Endothelial cell of umbilical vein (primary cell): ENCODE measurements at regions of chr17 and their contacts with region 1.

Region 1: GRCh38 chr17:28726226-28727130 is at the start of gene TLCD1:
- DNase-seq: peak; percentile 95
- H3K4me3 ChIP-seq: peak within 1 kb of the TSS; percentile 29 to 57 (median 41)
- H3K27ac ChIP-seq: peak within 1 kb of the TSS; percentile 10
- H3K4me1 ChIP-seq: peaks cover 38% of the 10 kb centered on the region
- H3K27me3 ChIP-seq: no peaks in the 10 kb centered on the region
- CTCF ChIP-seq: peak; percentile 98 to 99
- POLR2A ChIP-seq: no peak
- total RNA-seq, gene TLCD1: 1.8 and 2.6 TPM in 2 replicates

Region 2: GRCh38 chr17:28644985-28645939 is 81.2 kb before region 1 on chr17 and contains the start of gene BLTP2:
- CTCF ChIA-PET with region 1: interaction called, 12 read pairs
- POLR2A ChIA-PET with region 1: no interaction called
- dilution Hi-C with region 1: no loop called
- intact Hi-C with region 1: no loop called
- DNase-seq: peak; percentile 95
- H3K4me3 ChIP-seq: peak within 1 kb of the TSS; percentile 54 to 77 (median 71)
- H3K27ac ChIP-seq: peak within 1 kb of the TSS; percentile 36
- H3K4me1 ChIP-seq: peaks cover 23% of the 10 kb centered on the region
- H3K27me3 ChIP-seq: no peaks in the 10 kb centered on the region
- CTCF ChIP-seq: no peak
- POLR2A ChIP-seq: peak; percentile 93
- total RNA-seq, gene BLTP2: 164 and 165 TPM in 2 replicates

Region 3: DNA sequence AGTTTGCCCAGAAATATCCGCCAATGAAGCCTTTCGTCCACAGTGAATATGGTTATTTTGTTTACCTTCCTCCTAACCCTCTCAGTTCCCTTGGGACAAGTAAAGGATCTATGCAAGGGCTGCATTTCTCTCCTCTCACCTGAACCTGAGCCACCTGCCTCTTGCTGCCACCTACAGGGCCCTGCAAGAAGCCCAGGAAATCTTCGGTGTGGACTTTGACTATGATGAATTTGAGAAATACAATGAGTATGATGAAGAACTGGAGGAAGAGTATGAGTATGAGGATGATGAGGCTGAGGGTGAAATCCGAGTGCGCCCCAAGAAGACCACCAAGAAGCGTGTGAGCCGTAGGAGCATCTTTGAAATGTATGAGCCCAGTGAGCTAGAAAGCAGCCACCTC is 50.5 kb before region 1 on chr17:
- CTCF ChIA-PET with region 1: no interaction called
- POLR2A ChIA-PET with region 1: no interaction called
- dilution Hi-C with region 1: no loop called
- intact Hi-C with region 1: no loop called
- DNase-seq: no peak
- H3K4me3 ChIP-seq: no peak overlapping the region
- H3K27ac ChIP-seq: no peak overlapping the region
- H3K4me1 ChIP-seq: no peaks in the 10 kb centered on the region
- H3K27me3 ChIP-seq: no peaks in the 10 kb centered on the region
- CTCF ChIP-seq: no peak
- POLR2A ChIP-seq: no peak

Region 4: DNA sequence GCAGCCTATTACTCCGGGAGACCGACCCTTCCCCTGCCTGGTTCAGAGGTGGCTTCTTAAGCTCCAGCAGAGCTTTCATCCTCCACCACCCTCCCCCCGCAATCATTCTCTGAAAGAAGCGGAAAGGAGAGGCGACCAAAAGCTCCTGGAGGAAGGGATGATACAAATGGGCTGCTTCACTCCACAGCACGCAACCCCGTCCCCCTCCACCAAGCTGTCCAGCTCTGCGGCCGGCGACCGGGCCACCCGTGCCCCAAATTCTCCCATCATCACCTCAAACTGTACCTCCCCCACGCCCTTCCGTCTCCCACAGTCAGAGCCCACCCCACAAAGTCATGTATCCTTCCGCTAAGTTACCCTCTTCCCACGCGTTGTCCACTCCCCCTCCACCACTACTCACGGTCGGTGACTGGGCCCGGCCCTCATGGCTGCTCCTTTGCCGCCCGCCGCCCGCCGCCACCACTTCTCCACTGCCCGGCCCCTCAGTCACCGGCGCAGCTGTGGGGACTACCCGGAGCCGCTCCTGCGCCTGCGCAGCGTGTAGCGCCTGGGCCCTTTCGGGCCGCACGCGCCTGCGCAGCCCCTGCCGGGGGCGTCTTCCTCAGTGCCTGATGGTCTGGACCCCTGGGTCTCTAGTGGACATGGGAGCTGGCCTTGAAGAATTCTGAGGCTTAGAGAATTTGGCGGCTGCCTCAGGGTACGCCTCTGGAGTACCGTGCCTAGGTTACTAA is 116.0 kb after region 1 on chr17 and contains the start of gene FAM222B:
- CTCF ChIA-PET with region 1: interaction called, 11 read pairs
- POLR2A ChIA-PET with region 1: no interaction called
- dilution Hi-C with region 1: no loop called
- intact Hi-C with region 1: no loop called
- DNase-seq: peak; percentile 87
- H3K4me3 ChIP-seq: peak within 1 kb of the TSS; percentile 38 to 70 (median 65)
- H3K27ac ChIP-seq: peak within 1 kb of the TSS; percentile 54
- H3K4me1 ChIP-seq: peaks cover 19% of the 10 kb centered on the region
- H3K27me3 ChIP-seq: no peaks in the 10 kb centered on the region
- CTCF ChIP-seq: no peak
- POLR2A ChIP-seq: peak; percentile 72
- total RNA-seq, gene FAM222B: 30.6 and 33.7 TPM in 2 replicates

Region 5: DNA sequence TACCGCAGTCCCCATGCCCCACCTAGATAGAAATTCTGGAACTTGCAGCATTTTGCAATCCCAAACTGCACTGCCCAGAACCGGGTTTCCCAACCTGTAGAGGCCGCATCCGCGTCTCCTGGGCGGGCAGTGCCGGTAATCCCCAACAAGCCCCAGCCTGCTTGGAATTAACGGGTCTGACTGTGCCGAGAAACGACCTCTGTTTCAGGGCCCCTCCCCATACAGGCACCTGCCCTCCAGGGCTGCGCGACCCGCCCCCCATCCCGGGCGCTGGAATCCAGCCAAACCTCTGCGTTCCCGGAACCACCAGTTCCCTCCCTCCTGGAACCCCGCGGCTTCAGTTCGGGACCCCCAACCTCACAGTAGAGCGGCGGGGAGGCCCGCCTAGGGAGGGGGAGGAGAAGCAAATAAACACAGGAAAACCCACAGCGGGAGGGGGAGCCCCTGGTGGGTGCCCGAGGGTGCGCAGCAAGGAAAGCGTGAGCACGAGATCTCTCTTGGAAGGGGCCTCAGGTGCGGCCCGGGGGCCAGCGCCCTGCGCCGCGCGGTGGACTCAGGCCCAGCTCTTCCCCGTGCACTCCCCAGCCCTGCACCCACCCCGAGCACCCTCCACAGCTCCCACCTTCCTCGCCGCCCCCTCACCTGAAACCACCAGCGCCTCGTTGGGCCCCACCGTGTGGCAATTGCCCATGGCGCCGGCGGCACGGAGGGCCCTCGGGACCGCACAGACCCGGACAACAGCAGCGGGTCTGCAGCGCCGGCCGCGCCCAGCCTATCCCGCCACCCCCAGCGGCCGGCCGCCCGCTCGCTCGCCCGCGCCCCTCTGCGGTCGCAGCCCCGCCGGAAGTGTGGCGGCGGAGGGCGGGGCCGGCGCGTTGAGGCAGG is 170.6 kb after region 1 on chr17 and contains the start of gene FLOT2:
- CTCF ChIA-PET with region 1: interaction called, 19 read pairs
- POLR2A ChIA-PET with region 1: interaction called, 3 read pairs
- dilution Hi-C with region 1: no loop called
- intact Hi-C with region 1: loop called (anchors 2 kb)
- DNase-seq: peak; percentile 22
- H3K4me3 ChIP-seq: peak within 1 kb of the TSS; percentile 63 to 85 (median 66)
- H3K27ac ChIP-seq: peak within 1 kb of the TSS; percentile 19
- H3K4me1 ChIP-seq: peaks cover 41% of the 10 kb centered on the region
- H3K27me3 ChIP-seq: no peaks in the 10 kb centered on the region
- CTCF ChIP-seq: peak; percentile 4 to 31
- POLR2A ChIP-seq: peak; percentile 80
- total RNA-seq, gene FLOT2: 131 and 169 TPM in 2 replicates

Region 6: DNA sequence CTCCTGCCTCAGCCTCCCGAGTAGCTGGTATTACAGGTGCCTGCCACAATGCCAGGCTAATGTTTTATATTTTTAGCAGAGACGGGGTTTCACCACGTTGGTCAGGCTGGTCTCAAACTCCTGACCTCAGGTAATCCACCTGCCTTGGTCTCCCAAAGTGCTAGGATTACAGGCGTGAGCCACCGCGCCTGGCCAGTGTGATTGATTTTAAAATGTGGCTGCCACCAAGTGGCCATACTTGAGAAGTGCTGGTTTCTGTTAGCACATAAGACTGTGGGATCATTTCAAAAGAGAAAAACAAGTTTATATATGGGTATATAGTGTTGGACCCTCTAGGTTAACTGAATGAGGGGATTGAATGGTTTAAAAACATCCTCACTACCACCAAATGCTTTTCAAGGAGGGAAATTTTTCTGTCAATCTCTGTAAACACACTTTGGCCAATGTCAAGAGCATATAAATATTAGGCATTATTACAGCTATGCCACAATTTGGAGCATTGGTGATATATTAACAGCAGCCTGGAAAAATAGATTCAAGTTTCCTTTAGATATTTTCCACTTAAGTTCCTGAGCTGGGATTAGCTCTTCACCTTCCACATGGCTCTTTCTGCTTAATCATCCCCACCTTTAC is 189.9 kb after region 1 on chr17:
- CTCF ChIA-PET with region 1: interaction called, 39 read pairs
- POLR2A ChIA-PET with region 1: interaction called, 7 read pairs
- dilution Hi-C with region 1: no loop called
- intact Hi-C with region 1: loop called (anchors 1 kb)
- DNase-seq: peak; percentile 50
- H3K4me3 ChIP-seq: no peak overlapping the region
- H3K27ac ChIP-seq: no peak overlapping the region
- H3K4me1 ChIP-seq: peaks cover 13% of the 10 kb centered on the region
- H3K27me3 ChIP-seq: no peaks in the 10 kb centered on the region
- CTCF ChIP-seq: peak; percentile 46
- POLR2A ChIP-seq: no peak

Region 7: GRCh38 chr17:29111816-29112499 is 385.5 kb after region 1 on chr17:
- CTCF ChIA-PET with region 1: interaction called, 44 read pairs
- POLR2A ChIA-PET with region 1: interaction called, 3 read pairs
- dilution Hi-C with region 1: no loop called
- intact Hi-C with region 1: no loop called
- DNase-seq: peak; percentile 62
- H3K4me3 ChIP-seq: no peak overlapping the region
- H3K27ac ChIP-seq: no peak overlapping the region
- H3K4me1 ChIP-seq: peaks cover 3% of the 10 kb centered on the region
- H3K27me3 ChIP-seq: no peaks in the 10 kb centered on the region
- CTCF ChIP-seq: peak; percentile 85 to 98
- POLR2A ChIP-seq: no peak